Mammary epithelial cell (primary cell): ENCODE measurements at regions of chr4 and their contacts with region 1.

Region 1: GRCh38 chr4:147943159-147943638 is 211.3 kb downstream of the ARHGAP10 start:
- DNase-seq: no peak
- H3K4me3 ChIP-seq: no peak overlapping the region
- H3K27ac ChIP-seq: no peak overlapping the region
- H3K4me1 ChIP-seq: no peaks in the 10 kb centered on the region
- H3K27me3 ChIP-seq: no peaks in the 10 kb centered on the region
- CTCF ChIP-seq: no peak

Region 2: DNA sequence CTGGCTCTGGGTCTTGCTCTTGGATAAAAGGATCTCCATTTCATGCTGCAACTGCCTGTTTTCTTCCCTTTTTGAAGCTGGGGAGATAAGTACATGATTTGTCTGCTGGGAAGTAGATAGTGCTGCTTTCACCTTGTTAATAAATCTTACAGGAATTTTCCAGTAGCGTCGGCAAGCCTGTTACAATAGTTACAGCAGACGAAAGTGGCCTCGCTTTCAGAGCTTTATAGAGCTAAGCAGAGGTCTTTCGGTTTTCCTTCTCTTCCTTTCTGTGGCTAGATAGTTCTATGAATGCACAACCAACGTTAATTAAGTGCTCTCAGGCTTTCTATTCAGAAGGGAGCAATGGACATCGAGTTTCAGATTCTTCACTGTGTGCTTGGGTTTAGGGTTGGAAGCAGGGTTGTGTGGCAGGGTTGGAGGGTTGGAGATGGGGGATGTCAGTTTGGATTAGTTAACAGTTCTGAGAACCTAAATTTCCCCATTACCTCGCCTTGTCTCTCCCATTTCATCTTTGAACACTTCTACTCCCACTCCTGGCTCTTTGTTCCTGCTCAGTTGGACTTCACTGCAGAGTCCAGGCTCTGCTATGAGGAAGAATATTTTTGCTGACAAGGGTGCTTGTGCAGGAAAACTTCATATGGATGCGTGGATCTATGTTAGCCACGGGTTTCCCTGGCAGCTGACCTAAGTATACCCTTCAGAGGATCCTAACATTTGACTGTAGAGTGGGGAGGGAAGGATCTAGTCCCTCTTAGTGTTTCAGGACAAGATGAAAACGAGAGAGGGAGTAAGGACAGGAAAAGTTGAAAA is 26.6 kb after region 1 on chr4:
- CTCF ChIA-PET with region 1: no interaction called
- dilution Hi-C with region 1: no loop called
- in situ Hi-C with region 1: no loop called
- intact Hi-C with region 1: loop called (anchors 1 kb)
- DNase-seq: no peak
- H3K4me3 ChIP-seq: no peak overlapping the region
- H3K27ac ChIP-seq: no peak overlapping the region
- H3K4me1 ChIP-seq: no peaks in the 10 kb centered on the region
- H3K27me3 ChIP-seq: no peaks in the 10 kb centered on the region
- CTCF ChIP-seq: no peak